ENCODE measurements at regions of chr22 and their contacts with region 1.

Region 1: DNA sequence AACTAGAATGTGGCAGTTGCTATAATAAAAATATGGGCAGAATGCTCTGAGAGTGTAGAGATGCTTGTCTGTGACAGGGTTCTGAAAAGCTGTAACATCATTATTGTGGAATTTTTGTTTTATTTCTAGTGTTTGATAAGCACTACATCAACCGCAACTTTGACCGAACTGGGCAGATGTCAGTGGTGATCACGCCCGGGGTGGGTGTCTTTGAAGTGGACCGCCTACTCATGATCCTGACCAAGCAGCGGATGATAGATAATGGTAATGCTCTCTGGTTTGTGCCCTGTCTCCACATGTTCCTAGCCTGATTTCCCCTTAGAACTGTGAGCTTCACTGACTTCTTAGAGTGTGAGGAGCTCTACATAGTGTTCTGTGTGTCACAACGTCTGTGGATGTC is 48.8 kb downstream of the DEPDC5 start:
- DNase-seq: no peak
- H3K4me3 ChIP-seq: no peak overlapping the region
- H3K4me3 Mint-ChIP-seq: no peak overlapping the region
- H3K27ac ChIP-seq: no peak overlapping the region
- H3K27ac Mint-ChIP-seq: no peak overlapping the region
- H3K4me1 ChIP-seq: no peaks in the 10 kb centered on the region
- H3K4me1 Mint-ChIP-seq: no peaks in the 10 kb centered on the region
- H3K27me3 ChIP-seq: no peaks in the 10 kb centered on the region
- H3K27me3 Mint-ChIP-seq: no peaks in the 10 kb centered on the region
- CTCF ChIP-seq: no peak

Region 2: GRCh38 chr22:31707519-31707918 is 95.1 kb before region 1 on chr22:
- intact Hi-C with region 1: loop called in 1 of 2 experiments (anchors 10 kb)
- DNase-seq: no peak
- H3K4me3 ChIP-seq: no peak overlapping the region
- H3K4me3 Mint-ChIP-seq: no peak overlapping the region
- H3K27ac ChIP-seq: no peak overlapping the region
- H3K27ac Mint-ChIP-seq: peak overlapping the region in 1 of 7 donors; percentile 36
- H3K4me1 ChIP-seq: no peaks in the 10 kb centered on the region
- H3K4me1 Mint-ChIP-seq: peaks cover 4% of the 10 kb centered on the region
- H3K27me3 ChIP-seq: no peaks in the 10 kb centered on the region
- H3K27me3 Mint-ChIP-seq: peaks cover 0 to 2% (median 2%) of the 10 kb centered on the region in 3 donors
- CTCF ChIP-seq: no peak

Measured in CD14-positive monocyte (primary cell).